MCF 10A (cell line): ENCODE measurements at regions of chr22 and their contacts with region 1.

Region 1: GRCh38 chr22:33920927-33921524 is 750 bp upstream of the LARGE1 start:
- DNase-seq: peak; percentile 89
- H3K4me3 Mint-ChIP-seq: peak overlapping the region; percentile 88
- H3K27ac Mint-ChIP-seq: peak overlapping the region; percentile 28
- H3K4me1 Mint-ChIP-seq: peaks cover 25% of the 10 kb centered on the region
- H3K27me3 Mint-ChIP-seq: no peaks in the 10 kb centered on the region
- CTCF ChIP-seq: no peak

Region 2: GRCh38 chr22:33579448-33580093 is 341.5 kb before region 1 on chr22:
- CTCF ChIA-PET with region 1: no interaction called
- POLR2A ChIA-PET with region 1: no interaction called
- intact Hi-C with region 1: loop called (anchors 5 kb)
- DNase-seq: peak; percentile 9
- H3K4me3 Mint-ChIP-seq: no peak overlapping the region
- H3K27ac Mint-ChIP-seq: no peak overlapping the region
- H3K4me1 Mint-ChIP-seq: no peaks in the 10 kb centered on the region
- H3K27me3 Mint-ChIP-seq: no peaks in the 10 kb centered on the region
- CTCF ChIP-seq: peak; percentile 83

Region 3: GRCh38 chr22:33853200-33854097 is 67.6 kb before region 1 on chr22:
- CTCF ChIA-PET with region 1: interaction called, 4 read pairs
- POLR2A ChIA-PET with region 1: interaction called, 11 read pairs
- intact Hi-C with region 1: loop called (anchors 5 kb)
- DNase-seq: peak; percentile 56
- H3K4me3 Mint-ChIP-seq: peak overlapping the region; percentile 95
- H3K27ac Mint-ChIP-seq: peak overlapping the region; percentile 98
- H3K4me1 Mint-ChIP-seq: peaks cover 28% of the 10 kb centered on the region
- H3K27me3 Mint-ChIP-seq: no peaks in the 10 kb centered on the region
- CTCF ChIP-seq: no peak

Region 4: GRCh38 chr22:33940741-33941140 is 19.7 kb after region 1 on chr22:
- CTCF ChIA-PET with region 1: interaction called, 11 read pairs
- POLR2A ChIA-PET with region 1: no interaction called
- intact Hi-C with region 1: no loop called
- DNase-seq: no peak
- H3K4me3 Mint-ChIP-seq: no peak overlapping the region
- H3K27ac Mint-ChIP-seq: no peak overlapping the region
- H3K4me1 Mint-ChIP-seq: no peaks in the 10 kb centered on the region
- H3K27me3 Mint-ChIP-seq: no peaks in the 10 kb centered on the region
- CTCF ChIP-seq: no peak

Region 5: DNA sequence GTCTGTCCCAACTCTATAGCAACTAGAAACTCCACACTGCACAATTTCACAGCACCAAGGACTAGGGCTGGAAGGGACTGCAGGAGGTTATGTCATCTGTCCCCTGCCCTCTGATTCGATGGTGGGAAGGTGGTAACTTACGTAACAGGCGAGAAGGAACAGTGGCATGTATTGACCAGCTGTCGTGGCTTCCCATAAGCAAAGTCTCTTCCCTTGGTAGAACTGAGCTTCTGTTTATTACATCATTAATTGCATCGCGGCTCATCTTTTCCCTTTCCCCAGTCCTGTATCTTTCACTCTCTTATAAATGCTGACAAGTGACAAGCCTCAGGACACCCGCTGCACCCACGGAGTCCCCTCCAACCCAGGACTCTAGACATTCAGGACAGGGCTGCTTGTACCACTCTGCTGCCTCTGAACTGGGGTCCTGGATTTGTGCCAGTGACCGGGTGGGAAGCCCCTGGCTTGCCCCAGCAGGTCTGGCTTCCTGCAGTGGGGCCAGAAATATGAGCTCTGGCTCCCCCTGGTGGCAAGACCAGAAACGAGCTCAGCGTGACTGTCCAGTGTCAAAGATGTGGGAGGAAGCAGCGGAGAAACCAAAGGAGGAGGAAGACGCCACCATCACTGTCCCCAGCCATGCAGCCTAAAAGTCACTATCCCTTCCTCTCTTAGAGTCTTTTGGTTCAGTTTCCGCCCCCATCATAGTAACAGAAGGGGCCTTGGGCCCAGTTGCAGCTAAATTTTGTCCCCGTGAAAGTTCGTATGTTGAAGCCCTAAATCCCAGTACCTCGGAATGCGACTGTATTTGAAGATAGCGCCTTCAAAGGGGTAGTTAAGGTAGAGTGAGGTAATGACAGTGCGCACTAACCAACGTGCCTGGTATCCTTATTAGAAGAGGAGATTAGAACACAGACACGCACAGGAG is 1229.4 kb after region 1 on chr22:
- CTCF ChIA-PET with region 1: interaction called, 34 read pairs
- POLR2A ChIA-PET with region 1: no interaction called
- intact Hi-C with region 1: loop called (anchors 1 kb)
- DNase-seq: peak; percentile 50
- H3K4me3 Mint-ChIP-seq: no peak overlapping the region
- H3K27ac Mint-ChIP-seq: peak overlapping the region; percentile 16
- H3K4me1 Mint-ChIP-seq: no peaks in the 10 kb centered on the region
- H3K27me3 Mint-ChIP-seq: peaks cover 25% of the 10 kb centered on the region
- CTCF ChIP-seq: peak; percentile 76